ENCODE measurements at regions of chr17 and their contacts with region 1.

Region 1: GRCh38 chr17:61412143-61412859 is 12.7 kb downstream of the TBX2 start:
- DNase-seq: peak; percentile 95
- CTCF ChIP-seq: peak; percentile 96

Region 2: GRCh38 chr17:61376931-61377838 is 35.1 kb before region 1 on chr17:
- in situ Hi-C with region 1: no loop called
- DNase-seq: no peak
- CTCF ChIP-seq: no peak

Region 3: GRCh38 chr17:61720016-61720795 is 307.9 kb after region 1 on chr17:
- in situ Hi-C with region 1: no loop called
- DNase-seq: no peak
- CTCF ChIP-seq: no peak

Region 4: GRCh38 chr17:61837175-61838051 is 425.1 kb after region 1 on chr17:
- in situ Hi-C with region 1: loop called (anchors 25 kb)
- DNase-seq: peak; percentile 49
- CTCF ChIP-seq: peak; percentile 64

Measured in GM13976 (cell line).